ENCODE measurements at regions of chr7 and their contacts with region 1.

Region 1: GRCh38 chr7:127571741-127572505 is 13.5 kb downstream of the GCC1 start:
- DNase-seq: no peak
- ATAC-seq: no peak
- H3K4me3 Mint-ChIP-seq: no peak overlapping the region
- H3K27ac Mint-ChIP-seq: no peak overlapping the region
- H3K4me1 Mint-ChIP-seq: no peaks in the 10 kb centered on the region
- H3K27me3 Mint-ChIP-seq: no peaks in the 10 kb centered on the region

Region 2: GRCh38 chr7:127536741-127537140 is 35.2 kb before region 1 on chr7:
- CTCF ChIA-PET with region 1: no interaction called
- POLR2A ChIA-PET with region 1: no interaction called
- intact Hi-C with region 1: no loop called
- DNase-seq: no peak
- ATAC-seq: no peak
- H3K4me3 Mint-ChIP-seq: no peak overlapping the region
- H3K27ac Mint-ChIP-seq: no peak overlapping the region
- H3K4me1 Mint-ChIP-seq: no peaks in the 10 kb centered on the region
- H3K27me3 Mint-ChIP-seq: peaks cover 48% of the 10 kb centered on the region

Region 3: DNA sequence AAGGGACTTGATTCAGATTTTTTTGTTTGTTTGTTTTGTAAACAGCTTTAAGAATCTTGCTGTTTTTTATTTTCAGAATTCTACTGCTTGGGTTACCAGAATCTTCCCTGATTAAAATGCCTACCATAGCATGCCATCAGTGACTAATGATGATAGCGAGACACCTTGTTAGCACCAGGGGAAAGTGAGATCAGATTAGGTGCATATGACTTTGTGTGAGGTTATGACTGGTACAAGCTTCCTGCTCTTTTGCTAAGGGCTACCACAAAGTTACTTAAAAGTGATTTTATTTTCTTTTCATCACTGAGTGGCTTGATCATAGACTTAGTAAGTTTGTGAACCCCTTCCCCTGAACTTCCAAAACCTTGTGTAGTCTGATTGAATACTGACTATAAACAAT is 173.5 kb after region 1 on chr7:
- CTCF ChIA-PET with region 1: no interaction called
- POLR2A ChIA-PET with region 1: interaction called, 12 read pairs
- intact Hi-C with region 1: no loop called
- DNase-seq: peak; percentile 7
- ATAC-seq: peak; percentile 95
- H3K4me3 Mint-ChIP-seq: no peak overlapping the region
- H3K27ac Mint-ChIP-seq: no peak overlapping the region
- H3K4me1 Mint-ChIP-seq: peaks cover 53% of the 10 kb centered on the region
- H3K27me3 Mint-ChIP-seq: no peaks in the 10 kb centered on the region

Region 4: DNA sequence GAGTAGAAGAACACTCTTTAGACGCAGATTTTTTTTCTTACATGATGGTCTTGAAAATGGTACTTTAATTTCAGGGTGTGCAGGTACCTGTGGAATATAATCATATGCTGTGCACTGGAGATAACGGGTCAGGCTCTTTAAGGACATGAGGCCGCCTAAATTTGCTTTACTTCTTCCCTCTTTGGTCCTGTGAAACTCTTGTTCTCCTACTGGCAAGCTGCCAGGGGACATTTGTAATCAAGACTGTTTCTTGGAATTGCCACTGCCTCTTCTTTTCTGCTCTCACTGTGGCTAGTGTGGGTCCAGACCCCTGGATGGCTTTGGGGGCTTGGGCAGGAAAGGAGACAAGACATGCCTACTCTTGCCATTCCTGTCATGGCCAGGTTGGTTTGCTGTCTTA is 226.1 kb after region 1 on chr7:
- CTCF ChIA-PET with region 1: no interaction called
- POLR2A ChIA-PET with region 1: no interaction called
- intact Hi-C with region 1: no loop called
- DNase-seq: no peak
- ATAC-seq: no peak
- H3K4me3 Mint-ChIP-seq: no peak overlapping the region
- H3K27ac Mint-ChIP-seq: no peak overlapping the region
- H3K4me1 Mint-ChIP-seq: peaks cover 29% of the 10 kb centered on the region
- H3K27me3 Mint-ChIP-seq: no peaks in the 10 kb centered on the region

Measured in activated CD4-positive, alpha-beta T cell treated with anti-CD3 and anti-CD28 coated beads for 36 hours (primary cell).